K562 (cell line): ENCODE measurements at regions of chr12 and their contacts with region 1.

Region 1: GRCh38 chr12:50825372-50825838 is 17.3 kb upstream of the TMPRSS12 start:
- DNase-seq: peak; percentile 20 to 65 (median 27)
- ATAC-seq: peak; percentile 80
- H3K4me3 ChIP-seq: no peak overlapping the region
- H3K27ac ChIP-seq: peak overlapping the region; percentile 40; the same call in 1 of the 3 replicates
- H3K4me1 ChIP-seq: peaks cover 0 to 3% of the 10 kb centered on the region in 2 experiments; a peak in 1 of 5 replicates
- H3K27me3 ChIP-seq: no peaks in the 10 kb centered on the region
- CTCF ChIP-seq: peak in 2 of 3 experiments; percentile 40 to 65; a peak in 3 of 6 replicates
- EP300 ChIP-seq: 0 out of 2 replicates have a peak, but pooled peaks have one; percentile 4
- POLR2A ChIP-seq: no peak
- RAD21 ChIP-seq: peak; percentile 68 to 86

Region 2: GRCh38 chr12:50806176-50806575 is 19.2 kb before region 1 on chr12:
- CTCF ChIA-PET with region 1: no interaction called
- POLR2A ChIA-PET with region 1: no interaction called
- in situ Hi-C with region 1: no loop called
- intact Hi-C with region 1: no loop called
- DNase-seq: no peak
- ATAC-seq: 0 out of 3 replicates have a peak, but pooled peaks have one; percentile 31
- H3K4me3 ChIP-seq: no peak overlapping the region
- H3K27ac ChIP-seq: no peak overlapping the region
- H3K4me1 ChIP-seq: peaks cover 0 to 4% of the 10 kb centered on the region in 2 experiments; a peak in 1 of 5 replicates
- H3K27me3 ChIP-seq: no peaks in the 10 kb centered on the region
- CTCF ChIP-seq: no peak
- EP300 ChIP-seq: no peak
- POLR2A ChIP-seq: no peak
- RAD21 ChIP-seq: no peak

Region 3: DNA sequence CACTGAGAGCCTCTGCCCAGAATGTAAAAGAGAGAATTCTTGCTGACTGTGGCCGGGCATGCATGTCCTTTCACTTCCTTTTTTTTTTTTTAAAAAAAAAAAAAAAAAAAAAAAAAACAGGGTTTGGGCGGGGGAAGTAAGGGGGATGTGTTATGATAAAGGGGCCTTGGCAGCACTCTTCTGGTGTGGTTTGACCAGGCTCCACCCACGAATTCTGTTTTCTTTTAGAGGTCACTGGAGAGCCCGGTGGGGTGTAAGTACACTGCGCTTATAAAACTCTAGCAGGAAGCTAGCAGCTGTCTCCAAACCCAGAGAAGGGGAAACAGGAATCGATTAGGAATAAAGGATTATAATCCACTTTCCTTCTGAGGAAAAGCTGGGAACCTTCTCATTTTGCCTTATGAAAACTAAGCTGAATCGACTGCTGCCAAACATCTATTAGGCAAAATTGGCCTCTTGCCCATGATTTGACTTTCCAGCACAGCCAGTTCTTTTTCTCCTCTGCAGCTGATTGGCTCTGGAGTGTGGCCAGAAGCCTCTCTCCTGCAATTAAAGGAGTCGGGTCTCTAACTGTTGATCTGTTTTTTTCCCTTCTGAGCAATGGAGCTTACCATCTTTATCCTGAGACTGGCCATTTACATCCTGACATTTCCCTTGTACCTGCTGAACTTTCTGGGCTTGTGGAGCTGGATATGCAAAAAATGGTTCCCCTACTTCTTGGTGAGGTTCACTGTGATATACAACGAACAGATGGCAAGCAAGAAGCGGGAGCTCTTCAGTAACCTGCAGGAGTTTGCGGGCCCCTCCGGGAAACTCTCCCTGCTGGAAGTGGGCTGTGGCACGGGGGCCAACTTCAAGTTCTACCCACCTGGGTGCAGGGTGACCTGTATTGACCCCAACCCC is 99.3 kb after region 1 on chr12:
- CTCF ChIA-PET with region 1: no interaction called
- POLR2A ChIA-PET with region 1: no interaction called
- in situ Hi-C with region 1: no loop called
- intact Hi-C with region 1: loop called (anchors 5 kb)
- DNase-seq: peak; percentile 84 to 93 (median 87)
- ATAC-seq: peak; percentile 87
- H3K4me3 ChIP-seq: peak overlapping the region; percentile 61
- H3K27ac ChIP-seq: peak overlapping the region; percentile 95
- H3K4me1 ChIP-seq: peaks cover 3 to 21% of the 10 kb centered on the region in 2 experiments; a peak in 4 of 5 replicates
- H3K27me3 ChIP-seq: no peaks in the 10 kb centered on the region
- CTCF ChIP-seq: no peak
- EP300 ChIP-seq: no peak
- POLR2A ChIP-seq: peak; percentile 66
- RAD21 ChIP-seq: no peak

Region 4: GRCh38 chr12:50986966-50987737 is 161.7 kb after region 1 on chr12:
- CTCF ChIA-PET with region 1: interaction called, 33 read pairs
- POLR2A ChIA-PET with region 1: interaction called, 6 read pairs
- in situ Hi-C with region 1: no loop called
- intact Hi-C with region 1: loop called (anchors 1 kb)
- DNase-seq: peak; percentile 27 to 56 (median 40)
- ATAC-seq: peak; percentile 90
- H3K4me3 ChIP-seq: no peak overlapping the region
- H3K27ac ChIP-seq: no peak overlapping the region
- H3K4me1 ChIP-seq: no peaks in the 10 kb centered on the region
- H3K27me3 ChIP-seq: no peaks in the 10 kb centered on the region
- CTCF ChIP-seq: peak; percentile 58 to 72 (median 62)
- EP300 ChIP-seq: no peak
- POLR2A ChIP-seq: no peak
- RAD21 ChIP-seq: peak; percentile 86 to 88

Region 5: DNA sequence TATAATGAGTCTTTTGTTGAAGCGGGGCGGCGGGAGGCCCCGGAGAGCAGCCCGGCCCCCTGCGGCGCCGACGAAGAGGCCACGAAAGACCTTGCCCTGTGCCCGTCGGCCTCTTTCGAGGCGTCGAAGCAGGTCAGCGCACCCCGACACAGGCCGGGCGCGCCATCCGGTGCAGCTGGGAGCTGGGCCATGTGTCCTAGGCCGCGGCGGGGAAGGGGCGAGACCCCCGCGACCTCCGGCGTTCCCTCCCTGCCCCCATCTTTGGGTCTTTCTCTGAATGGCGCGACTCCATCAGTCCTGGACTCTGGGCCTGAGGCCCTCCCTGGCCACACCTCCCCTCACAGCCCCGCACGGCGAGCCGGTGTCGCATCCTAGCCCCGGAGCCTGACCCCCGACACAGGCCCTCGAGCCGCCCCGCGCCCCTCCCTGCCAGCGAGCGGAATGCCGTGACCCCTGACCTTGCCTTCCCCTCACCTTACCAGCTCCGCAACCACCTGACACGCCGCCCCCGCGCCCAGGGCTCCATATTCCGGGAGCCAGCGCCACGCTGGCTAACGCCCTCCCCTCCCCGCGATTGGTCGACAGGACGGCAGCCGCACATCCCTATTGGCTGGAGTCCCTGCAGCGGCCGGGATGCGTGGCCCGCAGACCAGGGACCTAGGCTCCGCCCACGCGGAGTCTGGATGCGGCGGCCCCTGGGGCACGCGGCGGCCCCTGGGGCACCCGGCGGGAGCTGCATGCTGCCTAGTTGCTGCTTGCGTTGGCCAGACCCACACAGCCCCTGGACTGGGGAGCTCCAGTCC is 200.6 kb after region 1 on chr12 and contains the start of gene SLC11A2:
- CTCF ChIA-PET with region 1: interaction called, 10 read pairs
- POLR2A ChIA-PET with region 1: interaction called, 3 read pairs
- in situ Hi-C with region 1: no loop called
- intact Hi-C with region 1: loop called (anchors 1 kb)
- DNase-seq: peak; percentile 98 to 99 (median 98)
- ATAC-seq: peak; percentile 91
- H3K4me3 ChIP-seq: peak within 1 kb of the TSS; percentile 66
- H3K27ac ChIP-seq: peak within 1 kb of the TSS; percentile 91
- H3K4me1 ChIP-seq: peaks cover 32 to 38% of the 10 kb centered on the region in 2 experiments
- H3K27me3 ChIP-seq: no peaks in the 10 kb centered on the region
- CTCF ChIP-seq: peak; percentile 18 to 28 (median 18); a peak in 3 of 6 replicates
- EP300 ChIP-seq: no peak; the same call in 1 of the 2 replicates
- POLR2A ChIP-seq: peak; percentile 83
- RAD21 ChIP-seq: peak in 1 of 2 experiments; percentile 12; a peak in 1 of 4 replicates
- polyA plus RNA-seq, gene SLC11A2: 21.1 to 27.6 TPM

Region 6: GRCh38 chr12:51246254-51246853 is 420.9 kb after region 1 on chr12:
- CTCF ChIA-PET with region 1: no interaction called
- POLR2A ChIA-PET with region 1: no interaction called
- in situ Hi-C with region 1: no loop called
- intact Hi-C with region 1: loop called (anchors 2 kb)
- DNase-seq: peak; percentile 25 to 88 (median 57)
- ATAC-seq: peak; percentile 86
- H3K4me3 ChIP-seq: peak overlapping the region; percentile 5; the same call in 1 of the 2 replicates
- H3K27ac ChIP-seq: peak overlapping the region; percentile 76
- H3K4me1 ChIP-seq: peaks cover 0 to 28% of the 10 kb centered on the region in 2 experiments; a peak in 3 of 5 replicates
- H3K27me3 ChIP-seq: no peaks in the 10 kb centered on the region
- CTCF ChIP-seq: peak; percentile 40 to 52 (median 44); a peak in 5 of 6 replicates
- EP300 ChIP-seq: peak; percentile 90
- POLR2A ChIP-seq: peak; percentile 72
- RAD21 ChIP-seq: peak; percentile 55 to 71

Region 7: DNA sequence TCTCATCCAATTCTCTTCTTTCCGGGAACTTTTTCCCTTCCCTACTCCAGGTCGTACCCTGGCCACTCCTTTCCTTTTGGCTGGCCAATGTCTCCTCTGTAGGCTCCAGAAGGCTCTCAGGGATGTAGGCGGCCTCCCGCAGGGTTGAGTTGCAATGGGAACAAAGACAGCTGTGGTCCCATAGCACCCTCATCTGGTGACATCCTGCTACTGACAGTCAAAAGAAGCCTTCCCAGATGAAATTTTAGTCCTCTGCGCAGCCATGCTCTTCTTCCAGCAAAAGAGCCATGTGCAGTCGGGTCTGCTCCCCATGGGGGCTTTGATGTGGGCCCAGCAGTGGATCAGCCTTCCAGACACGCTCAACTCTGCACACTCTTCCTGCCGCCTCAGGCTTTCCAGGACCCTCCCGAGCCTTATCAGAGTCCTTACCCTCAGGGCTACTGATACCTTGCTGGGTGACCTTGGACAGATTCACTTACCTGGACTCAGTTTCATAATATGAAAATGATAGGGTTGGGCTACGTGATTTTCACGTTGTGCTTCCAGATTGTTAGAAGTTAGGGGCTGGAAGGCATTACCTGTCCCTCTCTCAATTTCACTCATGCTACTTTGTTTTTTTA is 526.6 kb after region 1 on chr12:
- CTCF ChIA-PET with region 1: interaction called, 6 read pairs
- POLR2A ChIA-PET with region 1: no interaction called
- in situ Hi-C with region 1: loop called (anchors 5 kb)
- intact Hi-C with region 1: loop called (anchors 5 kb)
- DNase-seq: peak; percentile 64 to 82 (median 68)
- ATAC-seq: peak; percentile 90
- H3K4me3 ChIP-seq: no peak overlapping the region
- H3K27ac ChIP-seq: no peak overlapping the region
- H3K4me1 ChIP-seq: peaks cover 2 to 5% of the 10 kb centered on the region in 2 experiments; a peak in 3 of 5 replicates
- H3K27me3 ChIP-seq: no peaks in the 10 kb centered on the region
- CTCF ChIP-seq: peak; percentile 89 to 93 (median 93)
- EP300 ChIP-seq: no peak
- POLR2A ChIP-seq: no peak
- RAD21 ChIP-seq: peak; percentile 80 to 89